ENCODE measurements at regions of chr11 and their contacts with region 1.

Region 1: DNA sequence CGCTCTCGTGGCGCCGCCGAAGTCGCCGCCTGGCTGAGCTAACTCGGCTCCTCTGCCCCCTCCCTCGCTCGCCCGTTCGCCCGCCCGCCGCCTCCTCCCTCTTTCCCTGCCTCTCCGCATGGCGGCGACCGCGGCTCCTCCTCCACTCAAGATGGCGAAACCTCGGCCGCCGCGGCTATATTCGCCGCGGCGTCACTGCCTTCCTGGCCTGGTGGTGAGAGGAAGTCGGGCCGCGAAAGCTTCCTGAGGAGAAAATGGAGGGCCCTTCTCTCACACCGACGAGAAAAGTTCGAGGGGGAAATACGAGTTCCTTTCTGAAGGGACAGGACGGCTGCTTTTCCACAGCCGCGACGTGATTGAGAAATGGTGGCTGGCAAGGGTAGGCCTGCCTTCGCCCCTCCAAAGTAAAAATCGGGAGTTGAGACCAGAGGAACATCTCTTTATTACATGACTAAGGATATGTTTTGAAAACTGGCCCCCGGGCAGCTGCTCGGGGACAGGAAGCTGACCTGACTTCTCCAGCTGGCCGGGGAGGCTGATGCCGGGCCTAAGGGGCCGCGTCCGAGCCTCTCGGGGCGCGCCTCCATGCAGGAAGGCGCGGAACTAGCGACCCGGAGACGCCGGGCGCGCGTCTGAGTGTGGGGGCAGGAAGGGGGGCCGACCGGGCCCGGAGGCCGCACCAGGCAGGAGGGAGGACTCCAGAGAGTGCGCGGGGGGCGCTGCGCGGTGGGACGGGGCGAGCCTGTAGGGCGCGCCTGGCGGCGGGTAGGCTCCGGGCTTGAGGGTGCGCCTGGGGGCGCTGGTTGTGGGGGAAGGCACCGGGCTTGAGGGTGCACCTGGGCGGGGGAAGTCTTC is at the start of gene DDX6:
- DNase-seq: peak; percentile 96
- ATAC-seq: peak; percentile 47
- H3K4me3 Mint-ChIP-seq: peak within 1 kb of the TSS; percentile 87
- H3K27ac Mint-ChIP-seq: peak within 1 kb of the TSS; percentile 93
- H3K4me1 Mint-ChIP-seq: peaks cover 26% of the 10 kb centered on the region
- H3K27me3 Mint-ChIP-seq: no peaks in the 10 kb centered on the region
- total RNA-seq, gene DDX6: 175 to 178 TPM

Region 2: GRCh38 chr11:117817368-117818040 is 973.8 kb before region 1 on chr11:
- CTCF ChIA-PET with region 1: no interaction called
- POLR2A ChIA-PET with region 1: no interaction called
- intact Hi-C with region 1: loop called in 1 of 2 experiments (anchors 5 kb)
- DNase-seq: peak; percentile 95
- ATAC-seq: peak; percentile 45
- H3K4me3 Mint-ChIP-seq: peak overlapping the region; percentile 49
- H3K27ac Mint-ChIP-seq: peak overlapping the region; percentile 99
- H3K4me1 Mint-ChIP-seq: peaks cover 59% of the 10 kb centered on the region
- H3K27me3 Mint-ChIP-seq: no peaks in the 10 kb centered on the region

Region 3: DNA sequence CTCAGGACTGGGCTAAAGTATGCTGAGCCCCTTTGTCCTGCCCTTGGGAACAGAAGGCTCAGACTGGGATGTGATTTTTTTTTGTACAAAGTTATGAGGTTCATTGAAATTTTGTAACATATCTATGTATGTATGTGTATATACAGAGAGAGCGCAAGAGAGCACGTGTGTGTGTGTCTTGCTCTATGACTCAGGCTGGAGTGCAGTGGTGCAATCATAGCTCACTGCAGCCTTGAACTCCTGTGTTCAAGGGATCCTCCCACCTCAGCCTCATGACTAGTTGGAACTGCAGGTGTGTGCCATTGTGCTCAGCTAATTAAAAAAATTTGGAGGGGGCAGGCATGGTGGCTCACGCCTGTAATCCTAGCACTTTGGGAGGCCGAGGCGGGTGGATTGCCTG is 254.6 kb before region 1 on chr11:
- CTCF ChIA-PET with region 1: no interaction called
- POLR2A ChIA-PET with region 1: no interaction called
- intact Hi-C with region 1: no loop called
- DNase-seq: no peak
- ATAC-seq: peak; percentile 36
- H3K4me3 Mint-ChIP-seq: no peak overlapping the region
- H3K27ac Mint-ChIP-seq: no peak overlapping the region
- H3K4me1 Mint-ChIP-seq: peaks cover 5% of the 10 kb centered on the region
- H3K27me3 Mint-ChIP-seq: no peaks in the 10 kb centered on the region

Region 4: GRCh38 chr11:118689851-118690552 is 101.3 kb before region 1 on chr11:
- CTCF ChIA-PET with region 1: interaction called, 17 read pairs
- POLR2A ChIA-PET with region 1: interaction called, 9 read pairs
- intact Hi-C with region 1: loop called (anchors 1 to 5 kb)
- DNase-seq: peak; percentile 95
- ATAC-seq: peak; percentile 95
- H3K4me3 Mint-ChIP-seq: peak overlapping the region; percentile 65
- H3K27ac Mint-ChIP-seq: peak overlapping the region; percentile 84
- H3K4me1 Mint-ChIP-seq: peaks cover 46% of the 10 kb centered on the region
- H3K27me3 Mint-ChIP-seq: no peaks in the 10 kb centered on the region

Region 5: DNA sequence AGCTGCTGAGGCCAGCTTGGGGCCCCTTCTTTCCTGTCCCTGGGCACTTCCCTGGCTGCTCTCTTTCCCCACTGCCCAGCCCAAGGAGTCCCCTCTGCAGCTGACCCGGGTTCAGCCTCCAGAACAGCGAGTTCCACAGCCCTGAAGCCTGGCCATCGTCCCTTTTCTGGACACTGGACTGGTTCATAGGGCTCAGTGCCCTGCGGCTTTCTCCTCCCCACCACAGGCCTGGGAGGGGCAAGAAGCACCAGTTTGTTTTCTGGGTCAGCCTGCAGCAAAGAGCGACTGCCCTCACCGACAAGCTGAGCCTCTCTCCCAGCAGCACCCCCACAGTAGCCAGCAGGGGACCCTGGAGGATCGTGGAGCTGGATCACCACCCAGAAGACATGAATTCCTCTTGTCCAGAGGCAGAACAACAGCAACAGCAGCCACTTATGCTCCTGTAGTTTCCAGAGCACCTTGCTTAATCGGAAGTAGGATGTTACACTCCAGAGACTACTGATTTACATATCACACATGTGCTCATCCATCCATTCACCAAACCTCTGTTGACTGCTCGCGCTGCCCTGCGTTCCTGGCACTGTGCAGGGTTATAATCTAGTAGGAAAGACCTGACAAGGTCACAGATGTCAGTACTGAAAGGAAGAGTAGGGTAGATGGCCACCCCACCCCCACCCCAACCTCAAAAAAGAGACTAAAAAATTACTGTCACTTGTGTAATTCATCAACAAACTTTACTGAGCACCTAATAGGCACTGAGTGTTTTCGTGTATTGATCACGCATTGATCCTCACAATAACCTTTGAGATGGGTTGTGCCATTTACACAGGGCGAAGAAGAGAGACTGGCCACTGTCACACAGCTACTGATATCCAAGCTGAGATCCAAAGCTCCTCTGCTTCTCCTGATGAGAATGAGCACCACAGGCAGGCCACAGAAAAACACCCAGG is 79.3 kb after region 1 on chr11:
- CTCF ChIA-PET with region 1: interaction called, 4 read pairs
- POLR2A ChIA-PET with region 1: interaction called, 25 read pairs
- intact Hi-C with region 1: loop called in 1 of 2 experiments (anchors 1 kb)
- DNase-seq: peak; percentile 61
- ATAC-seq: peak; percentile 70
- H3K4me3 Mint-ChIP-seq: peak overlapping the region; percentile 71
- H3K27ac Mint-ChIP-seq: peak overlapping the region; percentile 99
- H3K4me1 Mint-ChIP-seq: peaks cover 57% of the 10 kb centered on the region
- H3K27me3 Mint-ChIP-seq: no peaks in the 10 kb centered on the region

Region 6: DNA sequence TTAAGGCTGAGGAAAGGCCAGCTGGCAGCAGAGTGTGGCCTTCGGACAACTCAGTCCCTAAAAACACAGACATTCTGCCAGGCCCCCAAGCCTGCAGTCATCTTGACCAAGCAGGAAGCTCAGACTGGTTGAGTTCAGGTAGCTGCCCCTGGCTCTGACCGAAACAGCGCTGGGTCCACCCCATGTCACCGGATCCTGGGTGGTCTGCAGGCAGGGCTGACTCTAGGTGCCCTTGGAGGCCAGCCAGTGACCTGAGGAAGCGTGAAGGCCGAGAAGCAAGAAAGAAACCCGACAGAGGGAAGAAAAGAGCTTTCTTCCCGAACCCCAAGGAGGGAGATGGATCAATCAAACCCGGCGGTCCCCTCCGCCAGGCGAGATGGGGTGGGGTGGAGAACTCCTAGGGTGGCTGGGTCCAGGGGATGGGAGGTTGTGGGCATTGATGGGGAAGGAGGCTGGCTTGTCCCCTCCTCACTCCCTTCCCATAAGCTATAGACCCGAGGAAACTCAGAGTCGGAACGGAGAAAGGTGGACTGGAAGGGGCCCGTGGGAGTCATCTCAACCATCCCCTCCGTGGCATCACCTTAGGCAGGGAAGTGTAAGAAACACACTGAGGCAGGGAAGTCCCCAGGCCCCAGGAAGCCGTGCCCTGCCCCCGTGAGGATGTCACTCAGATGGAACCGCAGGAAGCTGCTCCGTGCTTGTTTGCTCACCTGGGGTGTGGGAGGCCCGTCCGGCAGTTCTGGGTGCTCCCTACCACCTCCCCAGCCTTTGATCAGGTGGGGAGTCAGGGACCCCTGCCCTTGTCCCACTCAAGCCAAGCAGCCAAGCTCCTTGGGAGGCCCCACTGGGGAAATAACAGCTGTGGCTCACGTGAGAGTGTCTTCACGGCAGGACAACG is 104.1 kb after region 1 on chr11:
- CTCF ChIA-PET with region 1: interaction called, 6 read pairs
- POLR2A ChIA-PET with region 1: interaction called, 30 read pairs
- intact Hi-C with region 1: loop called in 1 of 2 experiments (anchors 5 kb)
- DNase-seq: peak; percentile 88
- ATAC-seq: peak; percentile 86
- H3K4me3 Mint-ChIP-seq: peak overlapping the region; percentile 52
- H3K27ac Mint-ChIP-seq: peak overlapping the region; percentile 92
- H3K4me1 Mint-ChIP-seq: peaks cover 72% of the 10 kb centered on the region
- H3K27me3 Mint-ChIP-seq: no peaks in the 10 kb centered on the region

Region 7: DNA sequence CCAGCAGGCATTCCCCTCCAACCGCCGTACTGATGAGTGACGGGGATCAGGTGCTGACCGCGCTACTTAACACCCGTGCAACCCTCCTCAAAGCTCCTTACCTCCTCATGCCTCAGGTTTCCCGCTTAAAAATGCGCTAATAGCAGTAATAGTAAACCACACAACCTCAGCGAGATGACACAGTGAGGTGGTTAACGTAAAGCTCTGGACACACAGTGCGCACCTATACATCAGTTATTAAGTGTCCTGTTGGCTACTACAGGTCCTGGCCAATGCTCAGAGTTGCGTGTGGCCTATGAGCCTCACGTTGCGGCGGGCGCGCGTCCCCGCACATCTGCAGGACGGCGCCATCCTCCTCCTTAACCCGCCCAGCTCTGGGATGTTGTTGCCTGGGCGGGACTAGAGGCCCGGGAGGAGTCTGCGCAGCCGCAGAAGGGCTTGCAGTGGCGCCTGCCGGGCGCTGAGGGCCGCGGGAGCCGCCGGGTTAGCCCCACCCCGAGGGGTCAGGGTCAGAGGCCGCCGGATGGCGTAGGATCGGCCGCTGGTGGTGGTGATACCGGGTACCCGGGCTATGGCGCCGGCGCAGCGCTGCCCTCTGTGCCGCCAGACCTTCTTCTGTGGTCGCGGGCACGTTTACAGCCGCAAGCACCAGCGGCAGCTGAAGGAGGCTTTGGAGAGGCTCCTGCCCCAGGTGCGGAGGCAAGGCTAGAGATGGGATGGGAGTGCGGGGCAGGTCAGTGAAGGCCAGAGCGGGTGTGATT is 206.5 kb after region 1 on chr11 and contains the start of gene CENATAC:
- CTCF ChIA-PET with region 1: interaction called, 4 read pairs
- POLR2A ChIA-PET with region 1: interaction called, 5 read pairs
- intact Hi-C with region 1: loop called (anchors 1 to 5 kb)
- DNase-seq: peak; percentile 98
- ATAC-seq: peak; percentile 93
- H3K4me3 Mint-ChIP-seq: peak within 1 kb of the TSS; percentile 88
- H3K27ac Mint-ChIP-seq: peak within 1 kb of the TSS; percentile 98
- H3K4me1 Mint-ChIP-seq: peaks cover 32% of the 10 kb centered on the region
- H3K27me3 Mint-ChIP-seq: no peaks in the 10 kb centered on the region
- total RNA-seq, gene CENATAC: 23.7 to 26.2 TPM

Region 8: DNA sequence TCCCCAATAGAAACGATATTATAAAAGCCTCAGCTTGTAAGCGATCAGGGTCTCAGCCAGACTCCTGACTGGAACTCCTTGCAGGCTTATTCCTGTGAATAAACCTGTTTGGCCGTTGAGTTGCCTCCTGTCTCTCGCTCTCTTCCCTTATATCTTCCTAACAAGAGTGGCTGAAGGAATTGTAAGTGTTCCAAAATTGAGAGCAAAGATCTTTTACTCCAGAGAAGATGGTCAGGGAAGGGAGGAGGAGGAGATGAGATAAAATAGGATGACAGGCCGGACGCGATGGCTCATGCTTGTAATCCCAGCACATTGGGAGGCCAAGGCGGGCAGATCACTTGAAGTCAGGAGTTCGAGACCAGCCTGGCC is 240.6 kb after region 1 on chr11:
- CTCF ChIA-PET with region 1: no interaction called
- POLR2A ChIA-PET with region 1: no interaction called
- intact Hi-C with region 1: no loop called
- DNase-seq: no peak
- ATAC-seq: no peak
- H3K4me3 Mint-ChIP-seq: no peak overlapping the region
- H3K27ac Mint-ChIP-seq: peak overlapping the region; percentile 6
- H3K4me1 Mint-ChIP-seq: peaks cover 19% of the 10 kb centered on the region
- H3K27me3 Mint-ChIP-seq: no peaks in the 10 kb centered on the region

Region 9: DNA sequence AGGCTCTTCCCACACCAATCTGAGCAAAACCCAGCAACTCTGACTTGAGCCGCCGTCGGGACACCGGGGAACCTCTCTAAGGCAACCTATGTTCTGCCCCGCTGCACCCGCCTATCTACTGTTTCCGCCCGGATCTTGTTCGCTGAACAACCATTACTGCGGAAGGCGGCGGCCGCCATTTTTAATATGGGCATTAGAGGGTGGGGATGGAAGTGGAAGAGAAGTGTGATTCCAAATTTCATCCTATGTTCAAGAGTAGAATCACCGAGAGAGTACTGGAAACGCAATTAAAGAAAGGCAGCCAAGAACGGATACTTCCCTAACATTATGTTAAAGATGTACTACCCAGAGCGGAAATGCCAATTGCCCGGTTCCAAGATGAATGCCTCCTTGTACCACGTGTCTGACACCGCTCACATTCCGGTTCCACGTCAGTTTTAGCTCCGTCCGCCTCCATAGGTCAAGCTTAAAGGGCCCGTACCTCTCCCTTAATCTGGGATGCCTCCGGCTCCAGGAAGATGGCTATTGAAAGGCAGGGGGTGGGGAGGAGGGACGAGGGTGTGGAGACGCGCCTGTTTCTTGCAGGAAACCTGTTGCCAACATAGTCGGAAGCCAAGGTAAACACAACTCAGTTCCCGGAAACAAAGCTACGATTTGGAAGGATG is 310.6 kb after region 1 on chr11 and contains the start of gene DPAGT1:
- CTCF ChIA-PET with region 1: no interaction called
- POLR2A ChIA-PET with region 1: interaction called, 3 read pairs
- intact Hi-C with region 1: loop called in 1 of 2 experiments (anchors 5 kb)
- DNase-seq: peak; percentile 93
- ATAC-seq: peak; percentile 86
- H3K4me3 Mint-ChIP-seq: peak within 1 kb of the TSS; percentile 95
- H3K27ac Mint-ChIP-seq: peak within 1 kb of the TSS; percentile 100
- H3K4me1 Mint-ChIP-seq: peaks cover 42% of the 10 kb centered on the region
- H3K27me3 Mint-ChIP-seq: no peaks in the 10 kb centered on the region
- total RNA-seq, gene DPAGT1: 57.8 to 73.5 TPM

Measured in activated CD4-positive, alpha-beta T cell treated with anti-CD3 and anti-CD28 coated beads for 36 hours (primary cell).